Activated CD4-positive, alpha-beta memory T cell treated with anti-CD3 and anti-CD28 coated beads, Interleukin-2, amount 10 ng/mL, durations not matched to agents 7 days and 5 days (primary cell): ENCODE measurements at regions of chr11 and their contacts with region 1.

Region 1: GRCh38 chr11:47213985-47214564 is 699 bp upstream of the DDB2 start:
- DNase-seq: peak; percentile 92
- H3K4me3 Mint-ChIP-seq: peak overlapping the region; percentile 90
- H3K27ac Mint-ChIP-seq: peak overlapping the region; percentile 100
- H3K4me1 Mint-ChIP-seq: peaks cover 48% of the 10 kb centered on the region
- H3K27me3 Mint-ChIP-seq: no peaks in the 10 kb centered on the region

Region 2: DNA sequence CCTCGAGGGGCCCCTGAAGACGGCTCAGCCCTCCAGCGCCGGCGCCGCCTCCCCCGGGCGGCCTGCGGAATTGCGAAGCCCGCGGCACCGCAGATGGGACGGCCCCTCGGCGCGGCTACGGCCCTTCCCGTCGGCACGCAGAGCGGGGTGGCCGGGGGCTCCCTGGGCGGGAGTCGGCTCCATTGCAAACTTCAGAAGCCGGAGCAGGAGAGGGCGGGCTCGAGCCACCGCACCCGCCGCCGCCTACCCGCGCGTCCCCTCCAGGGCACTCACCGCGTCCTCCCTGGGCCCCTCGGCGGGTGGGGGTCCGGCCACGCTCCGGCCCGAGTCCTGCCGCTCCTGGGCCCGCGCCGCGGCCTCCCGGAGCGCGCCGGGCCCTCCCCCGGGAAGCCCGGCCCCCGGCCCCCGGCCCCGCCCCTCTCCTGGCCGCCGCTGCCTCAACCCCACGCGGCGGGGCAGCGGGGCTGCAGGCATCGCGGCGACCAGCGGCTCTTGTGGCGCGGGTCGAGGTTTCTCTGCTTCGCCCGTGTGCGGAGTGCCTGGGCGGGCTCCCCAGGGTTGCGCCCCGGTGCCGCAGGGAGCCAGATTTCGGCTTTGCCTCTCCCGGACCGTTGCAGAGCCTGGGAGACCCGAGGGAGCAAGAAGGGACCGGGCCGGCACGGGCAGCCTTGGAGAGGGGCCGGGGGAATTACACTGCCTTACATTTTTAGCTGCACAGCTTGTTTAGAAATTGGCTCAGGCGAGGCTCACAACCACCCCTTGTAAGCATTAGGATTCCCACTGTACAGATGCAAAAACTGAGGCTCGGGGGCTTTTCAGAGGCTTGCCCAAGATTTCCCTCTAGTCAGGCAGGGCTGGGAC is 27.8 kb before region 1 on chr11 and contains the start of gene PACSIN3:
- CTCF ChIA-PET with region 1: interaction called, 15 read pairs
- POLR2A ChIA-PET with region 1: interaction called, 124 read pairs
- DNase-seq: peak; percentile 41
- H3K4me3 Mint-ChIP-seq: peak within 1 kb of the TSS; percentile 60
- H3K27ac Mint-ChIP-seq: no peak within 1 kb of the TSS
- H3K4me1 Mint-ChIP-seq: peaks cover 12% of the 10 kb centered on the region
- H3K27me3 Mint-ChIP-seq: peaks cover 39% of the 10 kb centered on the region
- total RNA-seq, gene PACSIN3: 0.91 to 1.2 TPM

Region 3: DNA sequence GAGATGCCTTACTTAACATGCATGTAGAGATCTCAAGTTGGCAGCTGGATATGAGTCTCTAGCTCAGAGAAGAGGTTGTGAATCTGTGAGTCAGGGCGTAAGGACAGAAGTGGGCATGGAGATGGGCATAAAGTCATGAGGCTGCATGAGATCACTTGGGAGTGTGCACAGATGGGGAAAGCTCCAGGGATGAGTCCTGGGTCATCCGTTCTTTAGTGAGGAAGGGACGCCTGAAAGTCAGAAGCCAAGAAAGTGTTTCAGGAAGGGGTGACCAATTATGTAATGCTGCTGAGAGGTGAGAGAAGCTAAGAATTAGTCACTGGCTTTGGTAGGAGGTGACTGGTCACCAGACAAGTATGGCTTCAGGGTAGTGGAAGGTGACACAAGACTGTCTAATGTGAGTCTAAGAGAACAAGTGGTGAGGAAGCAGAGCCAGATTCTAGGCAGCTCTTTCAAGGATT is 27.8 kb after region 1 on chr11:
- CTCF ChIA-PET with region 1: interaction called, 3 read pairs
- POLR2A ChIA-PET with region 1: interaction called, 161 read pairs
- DNase-seq: no peak
- H3K4me3 Mint-ChIP-seq: no peak overlapping the region
- H3K27ac Mint-ChIP-seq: peak overlapping the region; percentile 2
- H3K4me1 Mint-ChIP-seq: peaks cover 6% of the 10 kb centered on the region
- H3K27me3 Mint-ChIP-seq: no peaks in the 10 kb centered on the region

Region 4: GRCh38 chr11:47259178-47259977 is 45.3 kb after region 1 on chr11:
- CTCF ChIA-PET with region 1: interaction called, 23 read pairs
- POLR2A ChIA-PET with region 1: interaction called, 75 read pairs
- DNase-seq: peak; percentile 36
- H3K4me3 Mint-ChIP-seq: no peak overlapping the region
- H3K27ac Mint-ChIP-seq: no peak overlapping the region
- H3K4me1 Mint-ChIP-seq: peaks cover 9% of the 10 kb centered on the region
- H3K27me3 Mint-ChIP-seq: no peaks in the 10 kb centered on the region

Region 5: GRCh38 chr11:47394322-47395222 is 180.5 kb after region 1 on chr11:
- CTCF ChIA-PET with region 1: interaction called, 3 read pairs
- POLR2A ChIA-PET with region 1: interaction called, 12 read pairs
- DNase-seq: peak; percentile 72
- H3K4me3 Mint-ChIP-seq: peak overlapping the region; percentile 37
- H3K27ac Mint-ChIP-seq: peak overlapping the region; percentile 87
- H3K4me1 Mint-ChIP-seq: peaks cover 45% of the 10 kb centered on the region
- H3K27me3 Mint-ChIP-seq: no peaks in the 10 kb centered on the region

Region 6: DNA sequence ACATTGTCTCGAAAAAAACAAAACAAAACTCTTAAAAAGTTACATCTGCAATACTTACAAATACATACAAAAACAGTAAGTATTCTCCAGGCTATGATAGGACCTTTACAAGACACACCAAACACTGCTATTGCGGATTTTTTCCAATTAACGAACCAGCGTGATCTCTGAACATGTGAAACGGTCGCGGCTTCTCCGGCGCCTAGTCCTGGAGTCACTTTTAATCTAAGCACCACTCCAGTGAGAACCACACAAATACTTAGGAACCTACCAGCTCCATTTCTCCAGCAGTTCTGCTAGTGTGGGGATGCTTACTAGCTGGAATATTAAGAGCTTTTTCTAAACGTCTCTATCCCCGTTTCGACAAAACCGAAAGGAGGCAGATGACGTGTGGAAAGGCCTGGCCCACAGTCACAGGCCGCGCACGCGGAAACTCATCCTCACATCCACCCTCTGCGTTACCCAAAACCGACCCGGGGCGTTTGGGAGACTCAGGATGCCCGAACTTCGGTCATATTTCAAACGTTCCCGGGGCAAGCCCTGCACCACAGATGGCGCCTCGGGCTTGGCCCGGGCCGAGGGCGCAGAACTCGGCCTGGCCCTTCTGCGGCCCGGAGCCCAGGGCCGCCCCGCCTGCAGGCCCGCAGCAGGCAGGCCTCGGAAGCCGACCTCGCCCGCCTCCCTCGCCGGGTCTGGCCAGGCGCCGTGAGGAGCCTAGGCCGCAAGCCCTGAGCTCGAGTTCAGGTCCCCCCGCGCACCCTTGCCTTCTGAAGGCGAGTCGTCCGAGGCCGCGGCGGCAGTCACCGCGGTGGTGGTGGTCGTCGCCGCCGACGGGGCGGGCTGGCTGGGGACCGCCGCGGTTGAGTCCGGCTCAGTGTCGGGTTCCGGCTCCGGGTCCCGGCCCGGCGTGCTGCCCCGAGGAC is 552.5 kb after region 1 on chr11:
- CTCF ChIA-PET with region 1: no interaction called
- POLR2A ChIA-PET with region 1: interaction called, 13 read pairs
- DNase-seq: peak; percentile 82
- H3K4me3 Mint-ChIP-seq: peak overlapping the region; percentile 99
- H3K27ac Mint-ChIP-seq: peak overlapping the region; percentile 100
- H3K4me1 Mint-ChIP-seq: peaks cover 27% of the 10 kb centered on the region
- H3K27me3 Mint-ChIP-seq: no peaks in the 10 kb centered on the region